CD8-positive, alpha-beta T cell (primary cell): ENCODE measurements at regions of chr12 and their contacts with region 1.

Region 1: GRCh38 chr12:47397664-47398281 is 308.1 kb downstream of the RPAP3 start:
- DNase-seq: peak in 5 of 9 experiments; percentile 35 to 80 (median 50)
- ATAC-seq: peak; percentile 82
- H3K4me3 ChIP-seq: no peak overlapping the region
- H3K4me3 Mint-ChIP-seq: no peak overlapping the region
- H3K27ac ChIP-seq: peak overlapping the region in 1 of 2 experiments; percentile 44
- H3K27ac Mint-ChIP-seq: peak overlapping the region; percentile 84
- H3K4me1 ChIP-seq: peaks cover 43% of the 10 kb centered on the region
- H3K4me1 Mint-ChIP-seq: peaks cover 58% of the 10 kb centered on the region
- H3K27me3 ChIP-seq: no peaks in the 10 kb centered on the region
- H3K27me3 Mint-ChIP-seq: no peaks in the 10 kb centered on the region
- CTCF ChIP-seq: peak; percentile 74

Region 2: GRCh38 chr12:47021298-47021697 is 376.5 kb before region 1 on chr12:
- CTCF ChIA-PET with region 1: interaction called, 16 read pairs
- POLR2A ChIA-PET with region 1: no interaction called
- intact Hi-C with region 1: no loop called
- DNase-seq: peak in 3 of 9 experiments; percentile 11 to 70 (median 58)
- ATAC-seq: no peak
- H3K4me3 ChIP-seq: no peak overlapping the region
- H3K4me3 Mint-ChIP-seq: no peak overlapping the region
- H3K27ac ChIP-seq: no peak overlapping the region
- H3K27ac Mint-ChIP-seq: no peak overlapping the region
- H3K4me1 ChIP-seq: no peaks in the 10 kb centered on the region
- H3K4me1 Mint-ChIP-seq: no peaks in the 10 kb centered on the region
- H3K27me3 ChIP-seq: no peaks in the 10 kb centered on the region
- H3K27me3 Mint-ChIP-seq: peaks cover 16% of the 10 kb centered on the region
- CTCF ChIP-seq: peak; percentile 75

Region 3: DNA sequence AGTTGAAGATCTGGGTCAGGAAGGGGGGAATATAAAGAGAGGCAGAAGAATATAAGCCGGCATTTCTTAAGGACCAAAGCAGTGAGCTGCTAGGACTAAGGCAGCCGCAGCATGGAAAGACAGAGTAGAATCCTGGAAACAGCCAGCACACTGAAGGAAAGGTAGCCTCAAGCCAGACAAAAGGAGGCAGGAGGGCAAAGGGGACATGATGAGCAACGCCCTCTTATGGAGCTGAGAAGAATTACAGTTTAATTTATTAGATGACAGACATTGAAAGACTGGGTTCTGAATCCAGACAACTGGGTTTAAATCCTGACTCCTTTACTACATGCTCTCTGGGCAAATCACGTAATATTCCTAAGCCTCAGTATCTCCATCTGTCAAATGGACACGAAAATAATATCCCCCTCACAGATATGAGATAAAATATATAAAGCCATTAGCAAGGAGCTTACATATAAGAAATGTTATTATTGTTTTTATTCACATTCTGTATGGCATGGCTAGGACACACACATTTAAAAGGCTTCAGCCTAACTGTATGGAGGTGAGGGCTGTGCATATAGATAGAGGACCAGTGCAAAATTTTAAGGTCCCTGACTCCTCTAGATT is 326.4 kb before region 1 on chr12:
- CTCF ChIA-PET with region 1: interaction called, 14 read pairs
- POLR2A ChIA-PET with region 1: no interaction called
- intact Hi-C with region 1: no loop called
- DNase-seq: peak in 3 of 9 experiments; percentile 18 to 60 (median 46)
- ATAC-seq: peak; percentile 59
- H3K4me3 ChIP-seq: no peak overlapping the region
- H3K4me3 Mint-ChIP-seq: no peak overlapping the region
- H3K27ac ChIP-seq: no peak overlapping the region
- H3K27ac Mint-ChIP-seq: no peak overlapping the region
- H3K4me1 ChIP-seq: no peaks in the 10 kb centered on the region
- H3K4me1 Mint-ChIP-seq: peaks cover 9% of the 10 kb centered on the region
- H3K27me3 ChIP-seq: no peaks in the 10 kb centered on the region
- H3K27me3 Mint-ChIP-seq: no peaks in the 10 kb centered on the region
- CTCF ChIP-seq: peak; percentile 57

Region 4: DNA sequence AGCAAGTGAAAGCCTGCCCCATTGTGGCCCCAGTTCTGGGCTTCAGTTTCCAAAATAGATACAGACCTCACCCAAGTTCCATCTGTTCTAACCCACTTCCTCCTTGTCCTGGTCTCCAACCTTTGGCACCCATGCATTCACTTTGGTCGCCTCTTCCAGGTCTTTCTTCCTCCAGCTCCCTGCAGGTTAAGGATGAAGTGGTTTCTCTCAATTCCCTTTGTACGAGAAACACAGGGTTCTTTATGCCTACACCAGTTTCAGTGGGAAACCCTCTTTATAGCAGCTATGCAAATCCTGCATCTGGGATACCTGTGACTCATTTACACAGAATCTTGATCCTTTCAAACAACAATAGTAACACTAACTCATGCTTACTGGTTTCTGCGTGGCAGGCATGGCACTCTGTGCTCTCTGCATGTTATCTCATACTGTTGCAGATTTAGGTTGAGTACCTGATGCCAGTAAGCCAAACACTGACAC is 207.5 kb before region 1 on chr12:
- CTCF ChIA-PET with region 1: interaction called, 29 read pairs
- POLR2A ChIA-PET with region 1: interaction called, 4 read pairs
- intact Hi-C with region 1: loop called in 1 of 2 experiments (anchors 5 kb)
- DNase-seq: peak in 1 of 9 experiments; percentile 25
- ATAC-seq: no peak
- H3K4me3 ChIP-seq: no peak overlapping the region
- H3K4me3 Mint-ChIP-seq: peak overlapping the region; percentile 63
- H3K27ac ChIP-seq: peak overlapping the region in 1 of 2 experiments; percentile 69
- H3K27ac Mint-ChIP-seq: peak overlapping the region; percentile 89
- H3K4me1 ChIP-seq: peaks cover 85% of the 10 kb centered on the region
- H3K4me1 Mint-ChIP-seq: peaks cover 88% of the 10 kb centered on the region
- H3K27me3 ChIP-seq: no peaks in the 10 kb centered on the region
- H3K27me3 Mint-ChIP-seq: no peaks in the 10 kb centered on the region
- CTCF ChIP-seq: no peak

Region 5: DNA sequence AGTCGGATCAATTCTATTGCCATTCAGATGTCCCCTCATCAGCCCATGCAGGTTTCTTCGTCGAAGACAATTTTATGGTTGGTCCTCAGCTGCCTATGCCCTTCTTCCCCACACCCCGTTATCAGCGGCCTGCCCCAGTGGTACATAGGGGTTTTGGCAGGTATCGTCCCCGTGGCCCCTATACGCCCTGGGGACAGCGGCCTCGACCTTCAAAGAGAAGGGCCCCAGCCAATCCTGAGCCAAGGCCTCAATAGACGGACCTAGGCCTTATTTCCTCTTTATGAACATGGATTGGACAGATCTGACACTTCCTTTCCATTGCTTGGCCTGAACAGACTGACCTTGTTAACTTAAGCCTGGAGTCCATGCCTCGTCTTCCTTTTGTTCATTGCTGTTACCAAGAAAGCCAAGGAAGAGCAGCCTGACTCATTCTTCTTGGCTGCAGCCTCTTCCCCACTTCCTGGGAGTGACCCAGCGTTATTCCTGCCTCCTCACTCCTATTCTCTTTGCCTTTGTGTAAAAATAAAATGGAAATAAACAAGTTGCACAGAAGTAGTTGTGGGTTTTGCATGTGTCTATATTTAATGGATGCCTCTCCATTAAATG is 161.6 kb before region 1 on chr12:
- CTCF ChIA-PET with region 1: interaction called, 18 read pairs
- POLR2A ChIA-PET with region 1: no interaction called
- intact Hi-C with region 1: no loop called
- DNase-seq: no peak
- ATAC-seq: no peak
- H3K4me3 ChIP-seq: no peak overlapping the region
- H3K4me3 Mint-ChIP-seq: no peak overlapping the region
- H3K27ac ChIP-seq: no peak overlapping the region
- H3K27ac Mint-ChIP-seq: peak overlapping the region; percentile 73
- H3K4me1 ChIP-seq: peaks cover 44% of the 10 kb centered on the region
- H3K4me1 Mint-ChIP-seq: peaks cover 61% of the 10 kb centered on the region
- H3K27me3 ChIP-seq: no peaks in the 10 kb centered on the region
- H3K27me3 Mint-ChIP-seq: no peaks in the 10 kb centered on the region
- CTCF ChIP-seq: no peak

Region 6: GRCh38 chr12:47361389-47362021 is 36.3 kb before region 1 on chr12:
- CTCF ChIA-PET with region 1: interaction called, 12 read pairs
- POLR2A ChIA-PET with region 1: interaction called, 9 read pairs
- intact Hi-C with region 1: loop called in 1 of 2 experiments (anchors 2 kb)
- DNase-seq: peak in 7 of 9 experiments; percentile 19 to 76 (median 48)
- ATAC-seq: peak; percentile 42
- H3K4me3 ChIP-seq: peak overlapping the region; percentile 36 to 40
- H3K4me3 Mint-ChIP-seq: peak overlapping the region; percentile 79
- H3K27ac ChIP-seq: peak overlapping the region; percentile 64 to 94
- H3K27ac Mint-ChIP-seq: peak overlapping the region; percentile 96
- H3K4me1 ChIP-seq: peaks cover 71% of the 10 kb centered on the region
- H3K4me1 Mint-ChIP-seq: peaks cover 59% of the 10 kb centered on the region
- H3K27me3 ChIP-seq: no peaks in the 10 kb centered on the region
- H3K27me3 Mint-ChIP-seq: no peaks in the 10 kb centered on the region
- CTCF ChIP-seq: no peak

Region 7: GRCh38 chr12:47408171-47408871 is 10.5 kb after region 1 on chr12:
- CTCF ChIA-PET with region 1: interaction called, 10 read pairs
- POLR2A ChIA-PET with region 1: interaction called, 3 read pairs
- intact Hi-C with region 1: no loop called
- DNase-seq: peak in 6 of 9 experiments; percentile 24 to 74 (median 51)
- ATAC-seq: peak; percentile 67
- H3K4me3 ChIP-seq: peak overlapping the region in 1 of 2 experiments; percentile 12
- H3K4me3 Mint-ChIP-seq: no peak overlapping the region
- H3K27ac ChIP-seq: no peak overlapping the region
- H3K27ac Mint-ChIP-seq: peak overlapping the region; percentile 73
- H3K4me1 ChIP-seq: peaks cover 64% of the 10 kb centered on the region
- H3K4me1 Mint-ChIP-seq: peaks cover 77% of the 10 kb centered on the region
- H3K27me3 ChIP-seq: no peaks in the 10 kb centered on the region
- H3K27me3 Mint-ChIP-seq: no peaks in the 10 kb centered on the region
- CTCF ChIP-seq: peak; percentile 40